K562 (cell line): ENCODE measurements at regions of chr1 and their contacts with region 1.

Region 1: DNA sequence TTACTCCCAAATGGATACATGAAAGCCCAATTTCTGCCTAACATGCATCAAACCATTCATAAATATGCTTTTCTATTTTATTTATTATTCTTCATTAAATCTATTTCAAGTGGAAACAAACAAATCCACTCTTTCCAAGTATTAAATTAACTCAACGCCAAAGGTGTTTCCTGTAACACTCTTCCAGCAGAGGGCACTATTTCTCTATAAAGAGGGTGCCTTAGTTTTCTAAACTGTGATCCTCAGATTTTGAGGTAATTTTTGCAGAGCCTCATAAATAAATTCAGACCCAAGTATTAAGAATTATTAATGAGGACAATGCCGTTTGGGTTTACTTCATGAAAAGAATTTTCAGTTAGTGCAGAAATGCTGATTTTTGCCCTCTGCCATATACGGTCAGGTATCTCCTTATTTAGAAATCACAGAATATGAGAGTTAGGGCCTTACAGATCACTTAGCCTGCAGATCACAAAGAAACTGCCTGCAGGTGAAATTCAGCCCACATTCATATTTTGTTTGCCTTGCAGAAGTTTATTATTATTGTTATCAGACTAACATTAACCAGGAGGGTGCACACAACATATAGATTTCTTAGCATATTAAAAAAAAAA is 40.1 kb upstream of the MYSM1 start:
- DNase-seq: peak; percentile 44 to 69 (median 58)
- ATAC-seq: peak; percentile 86
- H3K4me3 ChIP-seq: no peak overlapping the region
- H3K27ac ChIP-seq: no peak overlapping the region
- H3K4me1 ChIP-seq: no peaks in the 10 kb centered on the region
- H3K27me3 ChIP-seq: peaks cover 4% of the 10 kb centered on the region in 2 experiments; a peak in 3 of 5 replicates
- CTCF ChIP-seq: peak; percentile 63 to 93 (median 64); a peak in 5 of 6 replicates
- EP300 ChIP-seq: no peak
- POLR2A ChIP-seq: no peak
- RAD21 ChIP-seq: peak; percentile 98

Region 2: GRCh38 chr1:59046730-59047157 is 306.8 kb after region 1 on chr1:
- CTCF ChIA-PET with region 1: no interaction called
- POLR2A ChIA-PET with region 1: no interaction called
- in situ Hi-C with region 1: no loop called
- intact Hi-C with region 1: loop called (anchors 5 kb)
- DNase-seq: no peak
- ATAC-seq: no peak
- H3K4me3 ChIP-seq: no peak overlapping the region
- H3K27ac ChIP-seq: no peak overlapping the region
- H3K4me1 ChIP-seq: peaks cover 3 to 12% of the 10 kb centered on the region in 2 experiments; a peak in 4 of 5 replicates
- H3K27me3 ChIP-seq: peaks cover 0 to 5% of the 10 kb centered on the region in 2 experiments; a peak in 1 of 5 replicates
- CTCF ChIP-seq: no peak
- EP300 ChIP-seq: no peak
- POLR2A ChIP-seq: no peak
- RAD21 ChIP-seq: no peak

Region 3: GRCh38 chr1:59699227-59699847 is 959.4 kb after region 1 on chr1:
- CTCF ChIA-PET with region 1: interaction called, 20 read pairs
- POLR2A ChIA-PET with region 1: no interaction called
- in situ Hi-C with region 1: loop called (anchors 10 kb)
- intact Hi-C with region 1: loop called (anchors 1 kb)
- DNase-seq: peak; percentile 45 to 58 (median 50)
- ATAC-seq: 0 out of 3 replicates have a peak, but pooled peaks have one; percentile 42
- H3K4me3 ChIP-seq: no peak overlapping the region
- H3K27ac ChIP-seq: no peak overlapping the region
- H3K4me1 ChIP-seq: no peaks in the 10 kb centered on the region
- H3K27me3 ChIP-seq: no peaks in the 10 kb centered on the region; a peak in 2 of 5 replicates
- CTCF ChIP-seq: peak; percentile 49 to 87 (median 78); a peak in 5 of 6 replicates
- EP300 ChIP-seq: no peak
- POLR2A ChIP-seq: no peak
- RAD21 ChIP-seq: peak; percentile 90 to 91

Region 4: DNA sequence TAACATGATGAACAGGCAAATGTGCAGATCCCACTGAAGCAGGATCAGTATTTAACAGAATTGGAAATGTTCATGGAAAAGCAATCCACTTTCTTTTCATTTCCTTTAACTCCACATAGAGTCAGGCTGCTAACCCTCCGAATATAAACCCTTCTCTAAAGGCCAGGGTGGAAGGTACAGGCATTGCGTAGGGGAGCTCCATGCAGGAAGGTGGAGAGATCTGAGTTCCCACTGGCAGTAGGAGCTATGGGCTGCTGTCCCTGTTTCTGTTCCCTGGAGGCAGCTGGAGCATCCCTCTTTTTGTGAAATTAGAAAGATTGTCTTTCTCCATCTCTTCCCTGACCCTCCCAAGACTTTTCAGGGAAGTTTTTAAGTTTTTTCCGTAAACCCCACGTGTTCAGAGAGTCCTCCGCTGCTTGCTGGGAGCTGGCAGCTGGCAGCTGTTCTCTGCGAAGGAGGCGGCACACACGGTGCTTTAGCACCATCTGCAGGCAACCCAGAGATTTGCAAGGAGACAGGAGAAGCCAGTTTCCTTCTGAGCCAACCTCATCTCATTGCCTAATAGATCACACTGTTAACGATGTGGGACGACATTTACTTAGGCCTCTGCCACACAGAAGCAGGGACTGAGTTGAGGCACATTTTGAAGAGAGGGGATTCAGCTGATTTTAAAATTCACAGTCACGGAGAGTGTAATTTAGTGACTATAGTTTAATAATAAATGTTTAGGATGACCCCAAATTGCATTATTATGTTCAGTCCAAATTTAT is 1019.4 kb after region 1 on chr1:
- CTCF ChIA-PET with region 1: interaction called, 12 read pairs
- POLR2A ChIA-PET with region 1: no interaction called
- in situ Hi-C with region 1: loop called (anchors 10 kb)
- intact Hi-C with region 1: loop called (anchors 1 kb)
- DNase-seq: peak; percentile 72 to 76 (median 75)
- ATAC-seq: peak; percentile 94
- H3K4me3 ChIP-seq: no peak overlapping the region
- H3K27ac ChIP-seq: no peak overlapping the region
- H3K4me1 ChIP-seq: no peaks in the 10 kb centered on the region
- H3K27me3 ChIP-seq: no peaks in the 10 kb centered on the region; a peak in 1 of 5 replicates
- CTCF ChIP-seq: peak; percentile 72 to 91 (median 90)
- EP300 ChIP-seq: no peak
- POLR2A ChIP-seq: no peak
- RAD21 ChIP-seq: peak; percentile 92 to 94

Region 5: GRCh38 chr1:59947047-59947938 is 1207.3 kb after region 1 on chr1:
- CTCF ChIA-PET with region 1: interaction called, 3 read pairs
- POLR2A ChIA-PET with region 1: no interaction called
- in situ Hi-C with region 1: loop called (anchors 25 kb)
- intact Hi-C with region 1: no loop called
- DNase-seq: peak; percentile 65 to 69 (median 66)
- ATAC-seq: peak; percentile 94
- H3K4me3 ChIP-seq: no peak overlapping the region
- H3K27ac ChIP-seq: no peak overlapping the region
- H3K4me1 ChIP-seq: no peaks in the 10 kb centered on the region
- H3K27me3 ChIP-seq: no peaks in the 10 kb centered on the region
- CTCF ChIP-seq: peak; percentile 80 to 85 (median 84)
- EP300 ChIP-seq: no peak
- POLR2A ChIP-seq: no peak
- RAD21 ChIP-seq: peak; percentile 75 to 85